B cell (primary cell): ENCODE measurements at regions of chr14 and their contacts with region 1.

Region 1: DNA sequence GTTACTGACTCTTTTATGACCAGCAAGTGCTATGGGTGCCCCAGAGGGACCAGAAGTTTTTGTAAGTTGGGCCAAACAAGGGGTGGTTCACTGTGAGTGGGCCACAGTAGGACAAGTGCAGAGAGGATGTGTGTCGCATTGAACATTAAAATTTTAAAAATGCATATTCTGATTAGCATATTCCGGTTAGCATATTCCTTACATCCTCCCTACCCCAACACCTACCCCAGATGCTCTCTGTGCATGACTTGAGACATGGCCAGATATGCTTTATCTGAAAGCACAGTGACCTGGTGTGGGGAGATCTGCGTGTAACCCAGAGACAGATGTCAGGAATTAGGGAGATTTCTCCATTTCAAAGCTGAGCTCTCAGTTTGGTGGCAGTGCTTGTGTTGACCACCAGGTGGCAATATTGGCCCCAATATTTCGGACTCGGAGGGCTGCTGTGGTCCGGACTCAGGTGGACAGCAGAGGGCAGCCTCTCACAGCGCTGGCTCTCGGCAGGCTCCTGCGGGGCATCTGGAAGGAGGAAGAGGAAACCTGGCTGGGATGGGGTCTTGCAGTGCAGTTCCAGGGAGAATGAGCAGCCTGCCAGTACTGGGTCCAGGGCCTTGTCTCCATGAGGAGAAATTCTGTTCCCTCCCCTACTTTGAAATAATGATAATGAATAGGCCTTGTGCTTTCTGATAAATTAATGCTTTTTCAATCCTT is 1.6 kb upstream of the CEBPE start:
- DNase-seq: peak; percentile 89
- ATAC-seq: peak; percentile 95
- H3K4me3 ChIP-seq: peak overlapping the region in 4 of 5 experiments; percentile 27 to 36 (median 30)
- H3K4me3 Mint-ChIP-seq: peak overlapping the region; percentile 79
- H3K27ac ChIP-seq: peak overlapping the region; percentile 72 to 88
- H3K27ac Mint-ChIP-seq: peak overlapping the region; percentile 89
- H3K4me1 ChIP-seq: peaks cover 32 to 35% of the 10 kb centered on the region in 2 donors
- H3K4me1 Mint-ChIP-seq: peaks cover 34% of the 10 kb centered on the region
- H3K27me3 ChIP-seq: no peaks in the 10 kb centered on the region
- H3K27me3 Mint-ChIP-seq: peaks cover 7% of the 10 kb centered on the region
- CTCF ChIP-seq: peak; percentile 99

Region 2: DNA sequence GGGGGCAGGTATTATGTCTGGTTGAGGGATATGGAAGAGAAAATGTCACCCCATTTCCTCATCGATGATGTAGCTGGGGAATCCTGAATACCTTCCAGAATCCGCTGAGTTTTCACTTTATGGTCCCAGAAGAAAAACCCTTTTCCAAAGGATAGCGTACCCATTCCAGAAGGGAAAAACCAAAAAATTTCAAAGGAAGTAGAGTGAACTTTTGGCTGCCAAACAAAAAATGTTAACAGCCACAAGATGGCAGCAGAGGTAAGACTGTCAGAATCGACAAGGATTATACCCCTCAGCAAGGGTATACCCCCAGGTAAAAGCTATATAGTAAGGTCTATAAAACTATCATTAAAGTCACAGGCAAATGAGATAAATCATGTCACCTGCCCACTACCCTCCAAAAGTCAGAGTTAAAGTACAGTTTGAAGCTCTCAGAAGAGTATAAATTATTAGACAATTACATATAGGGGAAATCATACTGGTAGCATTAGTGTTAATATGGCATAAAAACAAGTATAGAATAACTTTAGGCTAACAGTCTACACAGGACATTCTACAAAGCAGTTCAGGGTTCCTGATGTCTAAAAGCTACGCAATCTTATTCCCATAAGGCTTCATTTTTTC is 43.8 kb before region 1 on chr14:
- CTCF ChIA-PET with region 1: interaction called, 25 read pairs
- POLR2A ChIA-PET with region 1: interaction called, 5 read pairs
- intact Hi-C with region 1: no loop called
- DNase-seq: peak; percentile 62
- ATAC-seq: peak; percentile 66
- H3K4me3 ChIP-seq: no peak overlapping the region
- H3K4me3 Mint-ChIP-seq: no peak overlapping the region
- H3K27ac ChIP-seq: no peak overlapping the region
- H3K27ac Mint-ChIP-seq: no peak overlapping the region
- H3K4me1 ChIP-seq: peaks cover 2 to 4% of the 10 kb centered on the region in 2 donors
- H3K4me1 Mint-ChIP-seq: peaks cover 9% of the 10 kb centered on the region
- H3K27me3 ChIP-seq: no peaks in the 10 kb centered on the region
- H3K27me3 Mint-ChIP-seq: no peaks in the 10 kb centered on the region
- CTCF ChIP-seq: peak; percentile 83

Region 3: GRCh38 chr14:23186913-23187654 is 66.4 kb after region 1 on chr14:
- CTCF ChIA-PET with region 1: interaction called, 249 read pairs
- POLR2A ChIA-PET with region 1: interaction called, 3 read pairs
- intact Hi-C with region 1: loop called (anchors 1 kb)
- DNase-seq: peak; percentile 61
- ATAC-seq: no peak
- H3K4me3 ChIP-seq: no peak overlapping the region
- H3K4me3 Mint-ChIP-seq: no peak overlapping the region
- H3K27ac ChIP-seq: no peak overlapping the region
- H3K27ac Mint-ChIP-seq: no peak overlapping the region
- H3K4me1 ChIP-seq: peaks cover 9 to 17% of the 10 kb centered on the region in 2 donors
- H3K4me1 Mint-ChIP-seq: no peaks in the 10 kb centered on the region
- H3K27me3 ChIP-seq: peaks cover 0 to 8% (median 1%) of the 10 kb centered on the region in 4 experiments
- H3K27me3 Mint-ChIP-seq: no peaks in the 10 kb centered on the region
- CTCF ChIP-seq: peak; percentile 68

Region 4: GRCh38 chr14:23294734-23295561 is 174.3 kb after region 1 on chr14:
- CTCF ChIA-PET with region 1: interaction called, 21 read pairs
- POLR2A ChIA-PET with region 1: interaction called, 7 read pairs
- intact Hi-C with region 1: no loop called
- DNase-seq: peak; percentile 83
- ATAC-seq: peak; percentile 86
- H3K4me3 ChIP-seq: no peak overlapping the region
- H3K4me3 Mint-ChIP-seq: peak overlapping the region; percentile 27
- H3K27ac ChIP-seq: no peak overlapping the region
- H3K27ac Mint-ChIP-seq: peak overlapping the region; percentile 47
- H3K4me1 ChIP-seq: peaks cover 5 to 12% of the 10 kb centered on the region in 2 donors
- H3K4me1 Mint-ChIP-seq: peaks cover 25% of the 10 kb centered on the region
- H3K27me3 ChIP-seq: no peaks in the 10 kb centered on the region
- H3K27me3 Mint-ChIP-seq: no peaks in the 10 kb centered on the region
- CTCF ChIP-seq: peak; percentile 85

Region 5: DNA sequence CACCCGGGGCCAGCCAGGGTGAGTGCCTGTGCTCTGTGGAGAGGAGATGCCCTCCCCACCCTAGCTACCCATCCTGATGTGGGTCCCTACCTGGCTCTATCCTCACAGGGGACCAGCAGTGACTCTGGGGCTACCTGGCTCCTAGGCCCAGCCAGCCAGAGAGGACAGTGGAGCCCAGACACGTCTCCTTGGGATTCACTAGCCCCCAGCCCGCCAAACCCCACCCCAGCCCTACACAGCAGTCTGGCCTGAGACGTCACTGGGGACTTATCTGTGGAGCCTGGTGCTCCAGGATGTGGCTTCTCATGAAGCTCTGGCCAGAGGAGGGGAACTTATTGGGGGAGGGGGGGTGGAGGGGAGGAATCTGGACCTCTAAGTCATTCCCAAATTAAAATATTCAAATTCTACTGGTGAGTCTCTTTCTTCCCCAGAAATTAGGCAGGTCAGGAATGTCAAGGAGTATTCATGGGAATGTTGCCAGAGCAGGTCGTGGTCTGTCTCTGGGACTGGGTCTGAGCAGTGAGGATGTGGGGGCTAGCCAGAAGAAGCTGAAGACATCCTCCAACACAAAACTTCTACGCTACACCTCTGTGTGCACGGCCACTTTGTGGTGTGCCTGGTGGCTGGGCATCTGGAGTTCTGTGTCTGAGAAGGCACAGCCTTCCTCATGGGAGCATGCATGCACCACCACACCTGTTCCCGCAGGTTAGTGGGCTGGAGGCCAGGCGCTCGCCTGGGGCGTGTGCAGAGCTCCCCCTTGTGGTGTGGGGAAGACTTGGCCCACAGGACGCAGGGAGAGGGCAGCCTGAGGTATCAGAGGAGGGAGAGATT is 258.9 kb after region 1 on chr14:
- CTCF ChIA-PET with region 1: interaction called, 48 read pairs
- POLR2A ChIA-PET with region 1: no interaction called
- intact Hi-C with region 1: loop called (anchors 1 kb)
- DNase-seq: peak; percentile 74
- ATAC-seq: peak; percentile 87
- H3K4me3 ChIP-seq: no peak overlapping the region
- H3K4me3 Mint-ChIP-seq: no peak overlapping the region
- H3K27ac ChIP-seq: no peak overlapping the region
- H3K27ac Mint-ChIP-seq: no peak overlapping the region
- H3K4me1 ChIP-seq: no peaks in the 10 kb centered on the region
- H3K4me1 Mint-ChIP-seq: no peaks in the 10 kb centered on the region
- H3K27me3 ChIP-seq: peaks cover 0 to 16% (median 0%) of the 10 kb centered on the region in 4 experiments
- H3K27me3 Mint-ChIP-seq: peaks cover 25% of the 10 kb centered on the region
- CTCF ChIP-seq: peak; percentile 91